ENCODE measurements at regions of chr12 and their contacts with region 1.

Region 1: DNA sequence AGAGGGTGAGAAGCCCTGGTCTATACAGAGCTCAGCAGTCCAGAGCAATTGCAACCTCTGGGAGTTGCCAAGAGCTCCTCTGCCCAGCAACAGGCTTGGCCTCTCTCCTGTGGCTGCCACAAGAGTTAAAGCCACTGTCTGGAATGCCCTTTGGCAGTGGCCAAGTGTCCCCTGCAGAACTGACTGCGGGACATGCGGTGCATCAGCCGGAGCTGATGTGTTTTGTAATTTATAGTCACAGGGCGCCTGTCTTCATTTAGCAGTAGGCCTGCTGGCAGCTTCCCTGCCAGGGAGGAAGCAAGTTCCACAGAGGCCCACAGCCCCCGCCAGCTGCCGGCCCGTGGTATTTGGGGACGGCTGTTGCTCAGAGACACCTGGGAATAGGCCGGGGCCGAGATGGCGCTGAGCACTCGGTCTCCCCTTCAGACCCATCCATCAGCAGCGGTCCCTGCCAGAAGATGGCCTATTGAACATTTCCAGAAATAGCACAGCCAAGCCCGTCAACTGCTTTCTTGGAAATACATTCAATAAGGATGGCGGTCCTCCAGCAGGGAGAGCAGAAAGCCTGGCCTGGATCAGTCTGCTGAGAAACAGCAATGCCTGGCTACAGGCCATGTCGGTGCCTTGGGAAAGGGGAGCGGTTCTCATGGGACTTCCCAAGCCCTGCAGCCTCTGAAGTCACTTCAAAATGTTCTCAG is 217.4 kb downstream of the CRADD start:
- DNase-seq: no peak
- ATAC-seq: peak; percentile 31
- H3K4me3 ChIP-seq: no peak overlapping the region
- H3K4me3 Mint-ChIP-seq: no peak overlapping the region
- H3K27ac ChIP-seq: no peak overlapping the region
- H3K27ac Mint-ChIP-seq: peak overlapping the region in 3 of 9 donors; percentile 3 to 58 (median 52)
- H3K4me1 ChIP-seq: peaks cover 0 to 13% of the 10 kb centered on the region in 2 donors
- H3K4me1 Mint-ChIP-seq: peaks cover 11 to 60% (median 33%) of the 10 kb centered on the region in 7 donors
- H3K27me3 ChIP-seq: no peaks in the 10 kb centered on the region
- H3K27me3 Mint-ChIP-seq: no peaks in the 10 kb centered on the region

Region 2: GRCh38 chr12:93785262-93786010 is 109.1 kb before region 1 on chr12:
- CTCF ChIA-PET with region 1: no interaction called
- POLR2A ChIA-PET with region 1: no interaction called
- intact Hi-C with region 1: loop called in 1 of 2 experiments (anchors 2 kb)
- DNase-seq: peak in 2 of 9 donors; percentile 29 to 48
- ATAC-seq: peak; percentile 77
- H3K4me3 ChIP-seq: no peak overlapping the region
- H3K4me3 Mint-ChIP-seq: peak overlapping the region in 4 of 10 donors; percentile 2 to 87 (median 36)
- H3K27ac ChIP-seq: no peak overlapping the region
- H3K27ac Mint-ChIP-seq: peak overlapping the region in 7 of 9 donors; percentile 35 to 81 (median 58)
- H3K4me1 ChIP-seq: peaks cover 9 to 26% of the 10 kb centered on the region in 2 donors
- H3K4me1 Mint-ChIP-seq: peaks cover 26 to 64% (median 61%) of the 10 kb centered on the region in 7 donors
- H3K27me3 ChIP-seq: no peaks in the 10 kb centered on the region
- H3K27me3 Mint-ChIP-seq: no peaks in the 10 kb centered on the region

Region 3: GRCh38 chr12:93847517-93848474 is 46.7 kb before region 1 on chr12:
- CTCF ChIA-PET with region 1: no interaction called
- POLR2A ChIA-PET with region 1: no interaction called
- intact Hi-C with region 1: loop called in 1 of 2 experiments (anchors 5 kb)
- DNase-seq: no peak
- ATAC-seq: peak; percentile 40
- H3K4me3 ChIP-seq: no peak overlapping the region
- H3K4me3 Mint-ChIP-seq: peak overlapping the region in 2 of 10 donors; percentile 59 to 68
- H3K27ac ChIP-seq: no peak overlapping the region
- H3K27ac Mint-ChIP-seq: peak overlapping the region in 3 of 9 donors; percentile 31 to 85 (median 46)
- H3K4me1 ChIP-seq: peaks cover 0 to 13% of the 10 kb centered on the region in 2 donors
- H3K4me1 Mint-ChIP-seq: peaks cover 12 to 61% (median 23%) of the 10 kb centered on the region in 7 donors
- H3K27me3 ChIP-seq: no peaks in the 10 kb centered on the region
- H3K27me3 Mint-ChIP-seq: no peaks in the 10 kb centered on the region

Region 4: DNA sequence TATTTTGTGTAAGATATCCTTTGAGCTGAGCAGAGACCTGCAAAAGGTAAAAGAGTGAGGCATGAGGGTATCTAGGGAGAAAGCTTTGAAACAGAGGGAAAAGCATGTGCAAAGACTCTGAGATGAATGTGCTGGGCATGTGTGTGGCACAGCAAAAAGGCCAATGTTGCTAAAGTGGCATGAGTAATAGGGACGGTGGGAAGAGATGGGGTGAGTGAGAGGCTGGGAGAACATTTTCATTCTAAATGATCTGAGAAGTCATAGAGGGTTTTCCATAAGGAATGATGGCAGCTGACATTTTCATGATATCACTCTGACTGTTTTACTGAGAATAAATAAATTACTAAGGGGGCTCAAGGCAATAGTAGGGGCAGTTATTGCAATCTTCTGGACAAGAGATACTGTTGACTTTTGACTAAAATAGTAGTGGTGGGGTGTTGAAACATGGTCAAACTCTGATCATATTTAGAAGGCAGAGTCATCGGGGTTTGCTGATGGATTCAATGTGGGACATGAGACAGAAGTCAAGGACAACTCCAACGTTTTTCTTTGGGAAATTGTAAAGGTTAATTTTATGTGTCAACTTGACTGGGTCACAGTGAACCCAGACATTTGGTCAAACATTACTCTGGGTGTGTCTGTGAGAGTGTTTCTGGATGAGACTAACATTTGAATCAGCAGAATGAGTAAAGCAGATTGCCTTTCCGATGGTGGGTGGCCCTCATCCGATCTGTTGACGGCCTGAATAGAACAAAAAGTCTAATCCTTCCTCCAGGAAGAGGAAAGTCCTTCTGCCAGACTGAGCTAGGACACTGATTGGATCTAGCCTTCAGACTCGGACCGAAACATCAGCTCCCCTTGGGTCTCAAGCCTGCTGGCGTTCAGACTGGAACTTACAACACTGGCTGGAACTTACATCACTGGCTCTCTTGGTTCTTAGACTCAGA is 59.9 kb after region 1 on chr12:
- CTCF ChIA-PET with region 1: no interaction called
- POLR2A ChIA-PET with region 1: no interaction called
- intact Hi-C with region 1: loop called in 1 of 2 experiments (anchors 2 kb)
- DNase-seq: no peak
- ATAC-seq: no peak
- H3K4me3 ChIP-seq: no peak overlapping the region
- H3K4me3 Mint-ChIP-seq: no peak overlapping the region
- H3K27ac ChIP-seq: no peak overlapping the region
- H3K27ac Mint-ChIP-seq: peak overlapping the region in 1 of 9 donors; percentile 2
- H3K4me1 ChIP-seq: no peaks in the 10 kb centered on the region
- H3K4me1 Mint-ChIP-seq: peaks cover 0 to 10% (median 6%) of the 10 kb centered on the region in 7 donors
- H3K27me3 ChIP-seq: no peaks in the 10 kb centered on the region
- H3K27me3 Mint-ChIP-seq: no peaks in the 10 kb centered on the region

Region 5: GRCh38 chr12:93979189-93979588 is 84.6 kb after region 1 on chr12:
- CTCF ChIA-PET with region 1: no interaction called
- POLR2A ChIA-PET with region 1: no interaction called
- intact Hi-C with region 1: loop called in 1 of 2 experiments (anchors 2 kb)
- DNase-seq: peak in 4 of 9 donors; percentile 21 to 51 (median 31)
- ATAC-seq: peak; percentile 27
- H3K4me3 ChIP-seq: no peak overlapping the region
- H3K4me3 Mint-ChIP-seq: no peak overlapping the region
- H3K27ac ChIP-seq: no peak overlapping the region
- H3K27ac Mint-ChIP-seq: peak overlapping the region in 1 of 9 donors; percentile 27
- H3K4me1 ChIP-seq: no peaks in the 10 kb centered on the region
- H3K4me1 Mint-ChIP-seq: peaks cover 13 to 48% (median 30%) of the 10 kb centered on the region in 7 donors
- H3K27me3 ChIP-seq: no peaks in the 10 kb centered on the region
- H3K27me3 Mint-ChIP-seq: peaks cover 0 to 6% (median 0%) of the 10 kb centered on the region in 5 donors